Colonic mucosa (tissue), 4 donors: ENCODE measurements at regions of chr4 and their contacts with region 1.

Region 1: GRCh38 chr4:73869130-73870050 is at the start of gene CXCL1:
- DNase-seq: peak; percentile 85
- H3K4me3 ChIP-seq: peak within 1 kb of the TSS; percentile 49
- H3K27ac ChIP-seq: peak within 1 kb of the TSS; percentile 53
- H3K4me1 ChIP-seq: no peaks in the 10 kb centered on the region
- H3K27me3 ChIP-seq: no peaks in the 10 kb centered on the region
- CTCF ChIP-seq: no peak
- total RNA-seq, gene CXCL1: 8.4 to 19.6 TPM

Region 2: DNA sequence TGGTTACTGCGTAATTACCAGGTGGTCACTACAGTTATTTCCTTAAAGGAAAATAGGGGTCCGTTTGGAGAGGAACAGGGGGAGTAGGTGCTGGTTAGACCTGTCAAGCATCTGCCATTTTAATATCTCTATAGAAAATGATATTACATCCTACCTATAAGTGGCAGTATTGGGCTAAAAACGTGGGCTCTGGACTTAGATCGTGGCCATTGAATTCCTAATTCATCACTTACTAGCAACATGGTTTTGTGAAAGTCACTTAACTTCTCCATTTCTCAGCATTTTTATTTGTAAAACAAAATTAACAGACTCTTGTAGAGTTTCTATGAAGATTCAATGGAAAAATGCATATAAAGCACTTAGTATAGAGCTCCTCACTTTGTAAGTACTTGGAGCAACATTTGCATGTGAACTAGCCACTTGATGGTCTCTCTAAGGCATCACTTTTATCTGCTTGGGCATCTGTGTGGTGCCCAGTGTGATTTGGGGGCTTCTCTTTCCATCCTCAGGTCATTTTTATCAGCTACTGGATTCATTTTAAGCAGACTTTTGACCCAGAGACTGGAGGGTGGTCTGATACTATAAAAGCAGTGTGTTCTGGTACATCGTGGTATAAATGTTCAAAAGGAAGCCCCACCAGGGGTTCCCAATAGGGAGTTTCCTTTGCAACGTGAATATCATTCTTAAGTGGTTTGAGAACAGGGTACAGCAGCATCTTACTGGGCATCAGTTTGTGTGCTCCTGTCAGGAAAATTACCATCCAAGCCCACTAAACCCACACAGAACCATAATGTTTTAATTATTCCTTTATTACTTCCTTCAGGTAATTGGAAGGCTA is 206.5 kb before region 1 on chr4:
- intact Hi-C with region 1: loop called (anchors 5 kb)
- DNase-seq: no peak
- H3K4me3 ChIP-seq: no peak overlapping the region
- H3K27ac ChIP-seq: no peak overlapping the region
- H3K4me1 ChIP-seq: no peaks in the 10 kb centered on the region
- H3K27me3 ChIP-seq: no peaks in the 10 kb centered on the region
- CTCF ChIP-seq: peak; percentile 35

Region 3: GRCh38 chr4:74038161-74039064 is 169.0 kb after region 1 on chr4 and contains the start of gene CXCL3:
- intact Hi-C with region 1: loop called (anchors 5 kb)
- DNase-seq: peak; percentile 95
- H3K4me3 ChIP-seq: peak within 1 kb of the TSS; percentile 59
- H3K27ac ChIP-seq: peak within 1 kb of the TSS; percentile 68
- H3K4me1 ChIP-seq: no peaks in the 10 kb centered on the region
- H3K27me3 ChIP-seq: no peaks in the 10 kb centered on the region
- CTCF ChIP-seq: peak; percentile 40
- total RNA-seq, gene CXCL3: 17.5 to 20.2 TPM